ENCODE measurements at regions of chr14 and their contacts with region 1.

Region 1: GRCh38 chr14:75459099-75459741 is 31.4 kb downstream of the JDP2 start:
- DNase-seq: peak; percentile 99 to 100
- H3K4me3 ChIP-seq: no peak overlapping the region; the same call in 1 of the 2 replicates
- H3K27ac ChIP-seq: peak overlapping the region; percentile 94
- H3K4me1 ChIP-seq: peaks cover 84% of the 10 kb centered on the region
- H3K27me3 ChIP-seq: no peaks in the 10 kb centered on the region
- CTCF ChIP-seq: no peak

Region 2: GRCh38 chr14:75283882-75284563 is 175.2 kb before region 1 on chr14:
- CTCF ChIA-PET with region 1: no interaction called
- POLR2A ChIA-PET with region 1: interaction called, 14 read pairs
- intact Hi-C with region 1: no loop called
- DNase-seq: peak; percentile 49 to 78
- H3K4me3 ChIP-seq: no peak overlapping the region
- H3K27ac ChIP-seq: peak overlapping the region; percentile 46
- H3K4me1 ChIP-seq: peaks cover 47% of the 10 kb centered on the region
- H3K27me3 ChIP-seq: no peaks in the 10 kb centered on the region
- CTCF ChIP-seq: no peak; the same call in 1 of the 2 replicates

Region 3: GRCh38 chr14:75440733-75441477 is 18.3 kb before region 1 on chr14:
- CTCF ChIA-PET with region 1: interaction called, 9 read pairs
- POLR2A ChIA-PET with region 1: interaction called, 8 read pairs
- intact Hi-C with region 1: loop called (anchors 1 kb)
- DNase-seq: no peak
- H3K4me3 ChIP-seq: no peak overlapping the region
- H3K27ac ChIP-seq: no peak overlapping the region
- H3K4me1 ChIP-seq: peaks cover 25% of the 10 kb centered on the region
- H3K27me3 ChIP-seq: no peaks in the 10 kb centered on the region
- CTCF ChIP-seq: no peak

Region 4: GRCh38 chr14:75497191-75497590 is 38.0 kb after region 1 on chr14:
- CTCF ChIA-PET with region 1: no interaction called
- POLR2A ChIA-PET with region 1: no interaction called
- intact Hi-C with region 1: loop called (anchors 1 kb)
- DNase-seq: no peak
- H3K4me3 ChIP-seq: no peak overlapping the region
- H3K27ac ChIP-seq: no peak overlapping the region
- H3K4me1 ChIP-seq: peaks cover 4% of the 10 kb centered on the region; the same call in 1 of the 2 replicates
- H3K27me3 ChIP-seq: no peaks in the 10 kb centered on the region
- CTCF ChIP-seq: no peak

Region 5: DNA sequence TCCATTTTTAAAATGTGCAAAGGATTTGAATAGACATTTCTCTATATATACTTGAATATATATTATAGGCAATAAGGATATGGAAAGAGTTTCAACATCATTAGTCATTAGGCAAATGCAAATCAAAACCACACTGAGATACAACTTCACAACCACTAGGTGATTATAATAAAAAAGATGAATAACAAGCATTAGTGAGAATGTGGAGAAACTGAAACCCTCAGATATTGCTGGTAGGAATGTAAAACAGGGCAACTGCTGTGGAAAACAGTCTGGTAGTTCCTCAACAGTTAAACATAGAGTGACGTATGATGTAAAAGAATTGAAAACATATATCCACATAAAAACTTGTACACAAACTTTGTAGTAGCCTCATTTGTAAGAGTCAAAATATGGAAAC is 51.3 kb after region 1 on chr14:
- CTCF ChIA-PET with region 1: no interaction called
- POLR2A ChIA-PET with region 1: no interaction called
- intact Hi-C with region 1: no loop called
- DNase-seq: no peak
- H3K4me3 ChIP-seq: no peak overlapping the region
- H3K27ac ChIP-seq: no peak overlapping the region
- H3K4me1 ChIP-seq: no peaks in the 10 kb centered on the region
- H3K27me3 ChIP-seq: no peaks in the 10 kb centered on the region
- CTCF ChIP-seq: no peak

Region 6: GRCh38 chr14:75560962-75561432 is 101.8 kb after region 1 on chr14:
- CTCF ChIA-PET with region 1: interaction called, 10 read pairs
- POLR2A ChIA-PET with region 1: no interaction called
- intact Hi-C with region 1: loop called (anchors 1 kb)
- DNase-seq: peak; percentile 90 to 98
- H3K4me3 ChIP-seq: no peak overlapping the region
- H3K27ac ChIP-seq: peak overlapping the region; percentile 89
- H3K4me1 ChIP-seq: peaks cover 57% of the 10 kb centered on the region
- H3K27me3 ChIP-seq: no peaks in the 10 kb centered on the region
- CTCF ChIP-seq: peak; percentile 99

Measured in PC-9 (cell line).